ENCODE measurements at regions of chr1 and their contacts with region 1.

Region 1: GRCh38 chr1:6727535-6727934 is 25.9 kb upstream of the DNAJC11 start:
- DNase-seq: peak; percentile 75
- CTCF ChIP-seq: peak; percentile 77

Region 2: DNA sequence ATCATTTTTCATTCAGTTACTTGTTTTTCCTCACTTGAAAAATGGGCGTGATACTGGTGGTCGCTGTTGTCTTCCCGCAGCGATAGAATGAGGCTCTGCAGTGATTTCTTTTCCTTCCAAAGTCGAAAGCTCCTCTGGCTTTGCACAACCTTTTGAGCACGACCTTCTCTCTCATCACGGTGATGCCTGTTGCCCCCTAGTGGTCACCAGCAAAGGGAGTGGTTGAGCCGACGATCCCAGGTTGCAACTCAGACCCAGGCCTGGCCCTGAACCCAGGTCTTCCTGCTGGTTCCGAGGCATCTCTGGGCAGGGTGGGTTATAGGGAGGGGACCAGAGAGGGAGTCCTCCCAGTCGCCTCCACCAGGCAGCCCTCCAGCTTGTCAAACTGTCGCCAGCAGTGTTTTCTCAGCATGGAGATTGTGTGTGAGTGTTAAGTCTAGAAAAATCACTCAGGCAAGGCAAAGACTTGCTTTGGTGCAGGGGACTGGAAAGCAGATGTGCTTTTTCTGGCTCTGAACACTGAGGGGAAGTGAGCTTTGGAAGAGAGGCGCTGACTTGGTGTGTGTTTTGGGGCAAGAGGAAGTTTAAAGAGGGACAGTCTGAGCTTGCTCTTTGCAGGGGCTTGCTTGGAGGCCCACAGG is 343.0 kb after region 1 on chr1:
- in situ Hi-C with region 1: loop called (anchors 10 kb)
- DNase-seq: peak; percentile 83
- CTCF ChIP-seq: peak; percentile 87

Region 3: DNA sequence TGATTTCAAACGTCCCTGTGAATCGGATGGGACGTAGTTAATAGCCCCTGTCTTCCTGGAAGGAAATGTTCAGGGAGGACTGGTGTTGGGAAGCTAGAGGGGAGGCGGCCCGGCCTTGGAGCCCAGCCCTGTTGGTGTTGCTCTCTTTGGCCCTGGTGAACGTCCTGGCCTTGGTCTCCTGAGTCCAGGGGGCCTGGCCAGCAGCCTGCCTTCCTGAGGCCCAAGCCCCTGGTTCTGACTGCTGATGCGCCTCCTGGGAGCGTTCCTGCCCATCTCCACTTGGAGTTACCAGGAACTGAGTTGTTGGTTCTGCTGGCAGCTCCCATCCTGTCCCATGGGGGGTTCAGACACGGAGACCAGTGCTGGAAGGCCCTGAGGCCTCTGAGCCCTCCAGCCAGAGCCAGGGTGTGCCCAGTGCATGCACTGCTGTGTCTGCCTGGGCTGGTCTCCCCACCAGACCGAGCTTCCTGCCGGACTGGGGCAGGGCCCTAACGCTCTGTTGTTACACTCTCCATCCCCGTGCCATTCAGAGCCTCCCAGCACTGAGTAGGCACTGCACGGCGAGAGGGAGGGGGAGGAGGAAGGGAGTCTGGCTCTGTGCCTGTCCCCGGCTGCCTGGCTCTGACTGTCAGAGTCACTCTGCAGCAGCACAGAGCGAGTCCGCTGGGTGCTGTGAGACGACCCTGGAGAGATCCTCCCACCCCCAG is 661.1 kb after region 1 on chr1:
- in situ Hi-C with region 1: no loop called
- DNase-seq: no peak
- CTCF ChIP-seq: no peak